Panc1 (cell line): ENCODE measurements at regions of chr1 and their contacts with region 1.

Region 1: DNA sequence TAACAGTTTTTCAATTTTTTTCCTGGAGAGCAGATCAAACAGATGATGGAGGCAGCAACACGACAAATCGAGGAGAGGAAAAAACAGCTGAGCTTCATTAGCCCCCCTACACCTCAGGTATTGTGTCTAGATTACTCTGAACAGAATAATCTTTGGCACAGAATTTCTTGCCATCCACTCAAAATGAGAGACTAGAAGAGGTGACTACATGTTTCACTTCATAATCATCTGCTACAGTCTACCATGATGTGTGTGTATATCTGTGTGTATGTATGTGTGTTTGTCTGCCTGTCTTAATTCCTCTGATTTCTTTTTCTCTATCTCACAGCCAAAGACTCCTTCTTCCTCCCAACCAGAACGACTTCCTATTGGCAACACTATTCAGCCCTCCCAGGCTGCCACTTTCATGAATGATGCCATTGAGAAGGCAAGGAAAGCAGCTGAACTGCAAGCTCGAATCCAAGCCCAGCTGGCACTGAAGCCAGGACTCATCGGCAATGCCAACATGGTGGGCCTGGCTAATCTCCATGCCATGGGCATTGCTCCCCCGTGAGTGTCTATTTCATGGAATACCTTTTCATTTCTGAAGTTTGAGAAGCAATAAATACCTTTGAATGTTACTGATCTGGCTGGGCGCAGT is 11.4 kb downstream of the PRPF3 start:
- DNase-seq: no peak
- ATAC-seq: 0 out of 2 replicates have a peak, but pooled peaks have one; percentile 27
- H3K4me3 ChIP-seq: no peak overlapping the region
- H3K27ac ChIP-seq: no peak overlapping the region
- H3K4me1 ChIP-seq: no peaks in the 10 kb centered on the region
- H3K27me3 ChIP-seq: no peaks in the 10 kb centered on the region
- CTCF ChIP-seq: no peak

Region 2: GRCh38 chr1:150387200-150387599 is 54.4 kb after region 1 on chr1:
- CTCF ChIA-PET with region 1: no interaction called
- POLR2A ChIA-PET with region 1: no interaction called
- in situ Hi-C with region 1: no loop called
- intact Hi-C with region 1: no loop called
- DNase-seq: no peak
- ATAC-seq: no peak
- H3K4me3 ChIP-seq: no peak overlapping the region
- H3K27ac ChIP-seq: no peak overlapping the region
- H3K4me1 ChIP-seq: peaks cover 20% of the 10 kb centered on the region
- H3K27me3 ChIP-seq: no peaks in the 10 kb centered on the region
- CTCF ChIP-seq: no peak

Region 3: GRCh38 chr1:150650199-150650598 is 317.4 kb after region 1 on chr1:
- CTCF ChIA-PET with region 1: no interaction called
- POLR2A ChIA-PET with region 1: no interaction called
- in situ Hi-C with region 1: no loop called
- intact Hi-C with region 1: no loop called
- DNase-seq: no peak
- ATAC-seq: no peak; the same call in 1 of the 2 replicates
- H3K4me3 ChIP-seq: no peak overlapping the region
- H3K27ac ChIP-seq: no peak overlapping the region
- H3K4me1 ChIP-seq: no peaks in the 10 kb centered on the region
- H3K27me3 ChIP-seq: no peaks in the 10 kb centered on the region
- CTCF ChIP-seq: no peak

Region 4: GRCh38 chr1:151384584-151384983 is 1051.8 kb after region 1 on chr1:
- CTCF ChIA-PET with region 1: no interaction called
- POLR2A ChIA-PET with region 1: interaction called, 10 read pairs
- in situ Hi-C with region 1: no loop called
- intact Hi-C with region 1: no loop called
- DNase-seq: no peak
- ATAC-seq: no peak
- H3K4me3 ChIP-seq: no peak overlapping the region
- H3K27ac ChIP-seq: no peak overlapping the region
- H3K4me1 ChIP-seq: no peaks in the 10 kb centered on the region
- H3K27me3 ChIP-seq: no peaks in the 10 kb centered on the region
- CTCF ChIP-seq: no peak